OCI-LY7 (cell line): ENCODE measurements at regions of chr6 and their contacts with region 1.

Region 1: DNA sequence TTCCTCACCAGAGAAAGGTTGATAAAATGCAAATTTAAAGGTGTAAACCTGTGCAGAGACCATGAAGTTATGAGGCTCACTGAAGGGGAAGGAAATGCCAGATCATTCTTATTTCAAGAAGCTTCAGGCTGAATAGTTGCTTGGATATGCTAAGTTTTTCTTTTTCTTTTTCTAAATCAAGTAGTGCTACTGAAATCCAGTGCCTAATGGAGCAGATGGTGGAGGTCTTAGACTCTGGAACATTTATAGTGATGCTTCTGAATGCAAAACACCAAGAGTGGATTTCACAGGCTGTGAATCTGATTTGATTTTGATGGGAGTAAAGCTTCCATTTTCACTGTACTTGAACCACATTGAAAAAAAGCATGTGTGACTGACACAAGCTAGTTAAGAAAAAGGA is 151.2 kb upstream of the BEND3 start:
- DNase-seq: no peak
- H3K4me3 ChIP-seq: no peak overlapping the region
- H3K27ac ChIP-seq: no peak overlapping the region
- H3K4me1 ChIP-seq: peaks cover 6% of the 10 kb centered on the region
- CTCF ChIP-seq: no peak

Region 2: GRCh38 chr6:106488494-106489370 is 777.8 kb before region 1 on chr6:
- CTCF ChIA-PET with region 1: no interaction called
- POLR2A ChIA-PET with region 1: no interaction called
- intact Hi-C with region 1: loop called (anchors 5 kb)
- DNase-seq: no peak
- H3K4me3 ChIP-seq: no peak overlapping the region
- H3K27ac ChIP-seq: no peak overlapping the region
- H3K4me1 ChIP-seq: no peaks in the 10 kb centered on the region
- CTCF ChIP-seq: no peak

Region 3: DNA sequence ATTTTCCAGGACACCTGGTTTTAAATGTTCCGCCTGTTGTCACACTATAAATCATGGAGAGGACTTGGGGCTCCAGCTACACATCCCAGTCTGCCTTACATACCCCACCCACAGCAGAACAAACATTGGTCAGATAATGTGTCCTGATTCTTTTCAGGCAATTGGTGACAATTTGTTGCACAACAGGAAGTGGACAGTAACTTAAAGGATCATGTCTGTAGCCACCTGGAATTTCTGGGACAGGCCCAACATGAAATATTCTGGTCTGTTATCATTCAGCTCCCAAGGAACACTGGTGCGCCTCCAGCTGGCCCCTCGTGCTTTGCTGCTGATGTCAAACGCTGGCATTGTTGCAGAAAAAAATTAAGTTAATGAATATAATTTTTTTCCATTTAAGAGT is 340.6 kb after region 1 on chr6:
- CTCF ChIA-PET with region 1: no interaction called
- POLR2A ChIA-PET with region 1: no interaction called
- intact Hi-C with region 1: no loop called
- DNase-seq: no peak
- H3K4me3 ChIP-seq: no peak overlapping the region
- H3K27ac ChIP-seq: no peak overlapping the region
- H3K4me1 ChIP-seq: peaks cover 16% of the 10 kb centered on the region
- CTCF ChIP-seq: 0 out of 2 replicates have a peak, but pooled peaks have one; percentile 13